ENCODE measurements at regions of chr12 and their contacts with region 1.

Region 1: DNA sequence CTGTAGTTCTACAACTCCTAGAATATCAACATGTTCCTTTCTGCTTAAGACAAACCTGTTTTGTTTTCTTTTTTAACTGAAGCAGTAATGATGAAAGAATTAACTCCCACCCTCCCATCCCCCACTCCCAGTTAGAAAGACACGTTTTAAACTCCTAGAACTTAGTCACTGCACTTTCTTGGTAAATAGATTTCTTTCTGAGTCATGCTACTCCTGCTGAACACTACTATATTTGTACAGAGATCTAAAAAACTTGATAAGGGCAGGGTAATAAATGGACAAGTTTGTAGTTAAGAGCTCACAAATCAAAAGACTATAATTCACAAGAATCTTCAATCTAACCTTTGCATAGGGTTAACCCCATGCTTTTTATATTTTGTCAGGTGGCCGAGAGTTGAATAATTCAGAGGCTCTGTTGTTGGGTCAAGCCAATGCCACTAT is 118.9 kb upstream of the PTPRB start:
- DNase-seq: peak; percentile 92
- ATAC-seq: peak; percentile 90
- H3K4me3 ChIP-seq: peak overlapping the region; percentile 45
- H3K27ac ChIP-seq: peak overlapping the region; percentile 89
- H3K4me1 ChIP-seq: peaks cover 64% of the 10 kb centered on the region
- H3K27me3 ChIP-seq: no peaks in the 10 kb centered on the region
- CTCF ChIP-seq: no peak

Region 2: GRCh38 chr12:70467908-70468733 is 288.0 kb before region 1 on chr12:
- CTCF ChIA-PET with region 1: no interaction called
- POLR2A ChIA-PET with region 1: no interaction called
- intact Hi-C with region 1: no loop called
- DNase-seq: no peak
- ATAC-seq: no peak
- H3K4me3 ChIP-seq: no peak overlapping the region
- H3K27ac ChIP-seq: no peak overlapping the region
- H3K4me1 ChIP-seq: no peaks in the 10 kb centered on the region
- H3K27me3 ChIP-seq: no peaks in the 10 kb centered on the region
- CTCF ChIP-seq: no peak

Region 3: GRCh38 chr12:70549340-70550179 is 206.6 kb before region 1 on chr12:
- CTCF ChIA-PET with region 1: no interaction called
- POLR2A ChIA-PET with region 1: no interaction called
- intact Hi-C with region 1: no loop called
- DNase-seq: peak; percentile 43
- ATAC-seq: peak; percentile 45
- H3K4me3 ChIP-seq: no peak overlapping the region
- H3K27ac ChIP-seq: 0 out of 2 replicates have a peak overlapping the region, but pooled peaks have one; percentile 12
- H3K4me1 ChIP-seq: peaks cover 15% of the 10 kb centered on the region
- H3K27me3 ChIP-seq: no peaks in the 10 kb centered on the region
- CTCF ChIP-seq: no peak

Region 4: GRCh38 chr12:70745066-70745465 is 11.1 kb before region 1 on chr12:
- CTCF ChIA-PET with region 1: interaction called, 15 read pairs
- POLR2A ChIA-PET with region 1: no interaction called
- intact Hi-C with region 1: no loop called
- DNase-seq: no peak
- ATAC-seq: no peak
- H3K4me3 ChIP-seq: no peak overlapping the region
- H3K27ac ChIP-seq: peak overlapping the region; percentile 93
- H3K4me1 ChIP-seq: peaks cover 26% of the 10 kb centered on the region
- H3K27me3 ChIP-seq: no peaks in the 10 kb centered on the region
- CTCF ChIP-seq: no peak

Region 5: DNA sequence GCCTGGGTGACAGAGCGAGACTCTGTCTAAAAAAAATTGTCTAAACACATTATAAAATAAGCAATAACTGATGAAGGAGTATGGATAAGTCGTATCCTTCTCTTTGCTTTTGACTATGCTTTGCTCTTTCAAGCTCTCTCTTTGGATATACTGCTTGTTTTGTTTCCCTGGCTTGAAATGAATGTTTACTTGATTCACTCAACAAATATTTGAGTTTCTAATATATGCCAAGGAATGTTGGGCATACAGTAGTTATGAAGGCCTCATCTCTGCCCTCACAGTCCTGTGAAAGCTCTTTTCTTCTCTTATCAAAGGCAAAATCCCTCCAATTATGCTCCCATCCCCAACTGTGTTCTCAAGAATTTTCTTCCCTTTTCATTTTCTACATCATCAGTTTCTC is 40.8 kb after region 1 on chr12:
- CTCF ChIA-PET with region 1: no interaction called
- POLR2A ChIA-PET with region 1: no interaction called
- intact Hi-C with region 1: loop called (anchors 2 kb)
- DNase-seq: peak; percentile 78
- ATAC-seq: peak; percentile 86
- H3K4me3 ChIP-seq: no peak overlapping the region
- H3K27ac ChIP-seq: peak overlapping the region; percentile 25
- H3K4me1 ChIP-seq: peaks cover 37% of the 10 kb centered on the region
- H3K27me3 ChIP-seq: no peaks in the 10 kb centered on the region
- CTCF ChIP-seq: no peak

Region 6: GRCh38 chr12:70815971-70816391 is 59.8 kb after region 1 on chr12:
- CTCF ChIA-PET with region 1: no interaction called
- POLR2A ChIA-PET with region 1: no interaction called
- intact Hi-C with region 1: loop called (anchors 2 kb)
- DNase-seq: peak; percentile 83
- ATAC-seq: peak; percentile 93
- H3K4me3 ChIP-seq: no peak overlapping the region
- H3K27ac ChIP-seq: peak overlapping the region; percentile 54
- H3K4me1 ChIP-seq: peaks cover 19% of the 10 kb centered on the region
- H3K27me3 ChIP-seq: no peaks in the 10 kb centered on the region
- CTCF ChIP-seq: no peak

Region 7: DNA sequence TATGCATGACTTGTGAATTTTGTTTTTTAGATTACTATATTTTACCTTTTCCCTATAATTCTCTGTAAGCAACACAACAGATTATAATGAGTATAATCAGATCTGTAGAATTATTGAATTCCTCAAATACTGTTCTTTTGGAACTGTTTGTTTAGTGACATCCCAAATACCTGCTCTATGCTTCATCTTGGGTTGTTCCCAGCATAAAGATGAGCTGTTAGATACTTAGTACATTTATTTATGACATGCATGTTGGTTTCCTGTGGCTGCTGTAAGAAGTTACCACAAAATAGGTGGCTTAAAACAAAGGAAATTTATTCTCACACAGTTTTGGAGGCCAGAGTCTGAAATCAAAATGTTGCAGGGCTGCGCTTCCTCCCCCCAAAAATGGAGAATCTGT is 86.0 kb after region 1 on chr12:
- CTCF ChIA-PET with region 1: no interaction called
- POLR2A ChIA-PET with region 1: no interaction called
- intact Hi-C with region 1: loop called (anchors 2 kb)
- DNase-seq: peak; percentile 87
- ATAC-seq: peak; percentile 87
- H3K4me3 ChIP-seq: no peak overlapping the region
- H3K27ac ChIP-seq: peak overlapping the region; percentile 81
- H3K4me1 ChIP-seq: peaks cover 35% of the 10 kb centered on the region
- H3K27me3 ChIP-seq: no peaks in the 10 kb centered on the region
- CTCF ChIP-seq: no peak